Activated CD4-positive, alpha-beta memory T cell treated with anti-CD3 and anti-CD28 coated beads for 36 hours (primary cell): ENCODE measurements at regions of chr14 and their contacts with region 1.

Region 1: GRCh38 chr14:67514650-67515385 is 18.3 kb upstream of the PLEKHH1 start:
- DNase-seq: peak; percentile 44
- H3K4me3 Mint-ChIP-seq: peak overlapping the region; percentile 78
- H3K27ac Mint-ChIP-seq: no peak overlapping the region
- H3K4me1 Mint-ChIP-seq: peaks cover 7% of the 10 kb centered on the region
- H3K27me3 Mint-ChIP-seq: no peaks in the 10 kb centered on the region

Region 2: GRCh38 chr14:67221248-67221981 is 293.4 kb before region 1 on chr14:
- CTCF ChIA-PET with region 1: no interaction called
- POLR2A ChIA-PET with region 1: no interaction called
- intact Hi-C with region 1: no loop called
- DNase-seq: no peak
- H3K4me3 Mint-ChIP-seq: no peak overlapping the region
- H3K27ac Mint-ChIP-seq: no peak overlapping the region
- H3K4me1 Mint-ChIP-seq: no peaks in the 10 kb centered on the region
- H3K27me3 Mint-ChIP-seq: peaks cover 5% of the 10 kb centered on the region

Region 3: DNA sequence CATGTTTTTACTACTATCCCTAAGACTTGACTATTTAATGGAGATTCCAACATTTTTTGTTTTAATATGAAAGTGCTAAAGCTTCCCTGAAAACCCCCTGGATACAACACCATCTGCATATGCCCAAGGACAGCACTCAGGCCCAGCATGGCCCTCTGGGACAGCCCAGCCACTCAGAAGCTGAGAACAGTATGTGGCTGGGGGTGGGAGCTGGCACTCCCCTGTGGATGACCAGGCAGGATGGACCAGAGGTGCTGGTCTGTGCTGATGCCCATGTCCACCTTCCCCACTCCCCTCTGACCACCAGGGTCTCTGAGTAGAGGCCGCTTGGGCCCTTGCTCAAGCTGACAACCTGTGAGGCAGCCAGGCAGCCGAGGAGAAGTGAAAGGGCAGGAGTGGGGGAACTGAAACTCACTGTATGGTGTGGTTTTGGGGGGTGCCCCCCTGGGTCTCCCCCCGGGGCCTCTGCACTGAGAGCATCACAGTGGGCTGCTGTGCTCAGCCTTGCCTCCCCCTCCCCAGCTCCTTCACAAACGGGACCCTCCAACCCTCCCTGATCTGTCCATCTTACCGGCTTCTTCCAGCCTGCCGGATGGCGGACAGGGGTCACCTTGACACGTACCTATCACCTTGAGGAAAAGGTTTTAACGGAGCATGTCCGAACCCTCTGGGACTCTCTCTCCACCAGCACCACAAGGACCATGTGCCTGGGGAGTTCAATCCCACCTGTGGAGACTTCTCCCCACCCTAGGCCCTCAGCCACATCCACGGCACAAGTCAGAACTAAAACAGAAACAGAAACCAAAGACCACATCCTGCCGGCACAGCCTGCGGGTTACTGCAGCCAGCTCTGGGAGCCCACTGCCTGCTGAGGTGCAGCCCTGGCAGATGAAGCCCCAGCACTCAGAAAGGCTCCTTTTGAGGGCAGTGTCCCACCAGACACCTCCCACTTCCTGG is 26.6 kb before region 1 on chr14 and contains the start of gene TMEM229B:
- CTCF ChIA-PET with region 1: interaction called, 4 read pairs
- POLR2A ChIA-PET with region 1: no interaction called
- intact Hi-C with region 1: loop called (anchors 1 kb)
- DNase-seq: peak; percentile 88
- H3K4me3 Mint-ChIP-seq: peak within 1 kb of the TSS; percentile 71
- H3K27ac Mint-ChIP-seq: peak within 1 kb of the TSS; percentile 80
- H3K4me1 Mint-ChIP-seq: peaks cover 47% of the 10 kb centered on the region
- H3K27me3 Mint-ChIP-seq: peaks cover 1% of the 10 kb centered on the region
- total RNA-seq, gene TMEM229B: 0.93 to 1.1 TPM

Region 4: GRCh38 chr14:67564236-67564635 is 49.4 kb after region 1 on chr14:
- CTCF ChIA-PET with region 1: no interaction called
- POLR2A ChIA-PET with region 1: no interaction called
- intact Hi-C with region 1: no loop called
- DNase-seq: no peak
- H3K4me3 Mint-ChIP-seq: no peak overlapping the region
- H3K27ac Mint-ChIP-seq: no peak overlapping the region
- H3K4me1 Mint-ChIP-seq: no peaks in the 10 kb centered on the region
- H3K27me3 Mint-ChIP-seq: no peaks in the 10 kb centered on the region